ENCODE measurements at regions of chr10 and their contacts with region 1.

Region 1: DNA sequence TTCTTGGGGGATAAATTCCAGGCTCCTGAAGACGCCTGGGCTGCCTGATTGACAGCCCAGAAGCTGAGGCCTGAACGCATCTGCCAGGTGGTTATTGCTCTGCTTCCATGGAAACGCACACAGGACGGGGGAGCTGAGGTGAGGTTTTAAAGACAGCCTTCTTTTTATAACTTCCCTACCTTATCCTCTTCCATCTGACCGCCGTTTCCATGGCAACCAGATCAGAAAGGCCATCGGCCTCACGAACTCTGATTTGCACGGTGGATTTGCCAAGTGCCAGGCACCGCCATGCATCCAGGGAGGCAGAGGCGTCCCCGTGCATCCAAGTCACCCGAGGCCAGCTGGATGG is 260.9 kb downstream of the ADARB2 start:
- DNase-seq: no peak
- H3K4me3 ChIP-seq: no peak overlapping the region
- H3K27ac ChIP-seq: no peak overlapping the region
- H3K4me1 ChIP-seq: no peaks in the 10 kb centered on the region
- H3K27me3 ChIP-seq: no peaks in the 10 kb centered on the region
- CTCF ChIP-seq: no peak
- POLR2A ChIP-seq: no peak

Region 2: GRCh38 chr10:373522-374309 is 1102.7 kb before region 1 on chr10:
- intact Hi-C with region 1: no loop called
- DNase-seq: peak in 4 of 7 donors; percentile 53 to 82 (median 58)
- H3K4me3 ChIP-seq: no peak overlapping the region
- H3K27ac ChIP-seq: no peak overlapping the region
- H3K4me1 ChIP-seq: no peaks in the 10 kb centered on the region
- H3K27me3 ChIP-seq: no peaks in the 10 kb centered on the region
- CTCF ChIP-seq: no peak
- POLR2A ChIP-seq: no peak

Region 3: GRCh38 chr10:1268831-1269230 is 207.6 kb before region 1 on chr10:
- intact Hi-C with region 1: no loop called
- DNase-seq: peak in 1 of 7 donors; percentile 9
- H3K4me3 ChIP-seq: no peak overlapping the region
- H3K27ac ChIP-seq: no peak overlapping the region
- H3K4me1 ChIP-seq: no peaks in the 10 kb centered on the region
- H3K27me3 ChIP-seq: no peaks in the 10 kb centered on the region
- CTCF ChIP-seq: no peak
- POLR2A ChIP-seq: no peak

Region 4: DNA sequence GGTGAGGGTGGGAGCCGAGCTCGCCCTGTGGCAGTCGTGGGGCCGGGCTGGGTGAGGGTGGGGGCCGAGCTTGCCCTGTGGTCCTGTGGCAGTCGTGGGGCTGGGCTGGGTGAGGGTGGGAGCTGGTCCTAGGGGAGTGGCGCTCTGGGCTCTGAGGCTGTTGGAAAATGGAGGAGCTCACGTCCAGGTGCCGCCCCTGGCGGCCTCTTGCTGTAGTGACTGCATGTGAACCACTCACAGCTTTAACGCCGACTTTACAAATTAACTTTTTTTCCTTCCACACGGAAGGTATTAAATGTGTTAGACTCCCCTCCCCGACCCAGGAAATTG is 107.6 kb before region 1 on chr10:
- intact Hi-C with region 1: no loop called
- DNase-seq: peak in 5 of 7 donors; percentile 33 to 68 (median 45)
- H3K4me3 ChIP-seq: no peak overlapping the region
- H3K27ac ChIP-seq: no peak overlapping the region
- H3K4me1 ChIP-seq: no peaks in the 10 kb centered on the region
- H3K27me3 ChIP-seq: peaks cover 5% of the 10 kb centered on the region
- CTCF ChIP-seq: peak in 5 of 6 experiments; percentile 18 to 55 (median 42)
- POLR2A ChIP-seq: no peak

Region 5: DNA sequence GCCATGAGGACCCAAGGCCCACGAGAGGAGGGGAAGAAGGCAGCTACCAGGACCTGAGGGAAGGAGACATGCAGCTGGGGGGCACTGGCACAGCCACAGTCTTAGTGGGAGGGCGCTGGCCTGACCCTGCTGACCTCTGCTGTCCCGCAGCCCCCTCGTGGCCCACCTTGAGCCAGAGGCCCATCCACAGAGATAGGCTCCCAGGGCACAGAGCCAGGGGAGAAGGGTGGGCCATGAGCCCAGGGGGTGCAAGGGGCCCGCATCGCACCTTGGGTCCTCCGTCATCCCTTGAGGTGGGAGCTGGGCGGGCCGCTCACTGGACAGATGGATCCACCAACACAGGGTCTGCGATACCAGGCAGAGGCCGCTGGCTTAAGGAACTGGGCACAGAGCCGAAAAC is 1203.2 kb after region 1 on chr10:
- intact Hi-C with region 1: loop called in 1 of 2 experiments (anchors 10 kb)
- DNase-seq: no peak
- H3K4me3 ChIP-seq: no peak overlapping the region
- H3K27ac ChIP-seq: no peak overlapping the region
- H3K4me1 ChIP-seq: no peaks in the 10 kb centered on the region
- H3K27me3 ChIP-seq: no peaks in the 10 kb centered on the region
- CTCF ChIP-seq: no peak
- POLR2A ChIP-seq: no peak